Vagina (tissue), 2 donors: ENCODE measurements at regions of chr4 and their contacts with region 1.

Region 1: DNA sequence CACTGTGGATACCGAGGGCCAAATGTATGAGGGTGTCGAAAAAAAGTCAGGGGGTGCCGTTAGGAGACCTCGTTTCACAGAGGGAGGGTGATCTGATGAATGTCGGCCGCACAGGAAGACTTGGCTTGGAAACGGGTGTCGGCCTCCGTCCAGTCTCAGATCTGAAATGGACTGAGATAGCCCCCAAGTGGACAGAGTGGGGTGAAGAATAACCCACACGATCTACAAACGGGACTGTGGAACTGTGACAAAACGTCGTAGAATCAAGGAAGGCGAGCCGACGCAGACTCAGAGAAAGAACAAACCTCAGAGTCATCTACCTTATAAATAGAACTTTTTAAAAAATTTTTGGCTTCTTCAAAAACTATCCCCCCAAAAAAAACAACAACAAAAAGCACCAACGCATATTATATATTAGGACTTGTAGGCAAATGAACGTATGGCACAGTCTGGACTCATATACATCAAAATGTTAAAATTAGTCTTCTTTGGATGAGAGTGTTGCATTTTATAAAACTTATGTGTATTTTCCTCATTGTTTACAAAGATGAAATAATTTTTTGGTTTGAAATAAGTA is 63.8 kb upstream of the IRF2 start:
- DNase-seq: peak in 1 of 2 donors; percentile 96
- H3K4me3 ChIP-seq: peak overlapping the region; percentile 53 to 80
- H3K27ac ChIP-seq: peak overlapping the region; percentile 88
- H3K4me1 ChIP-seq: peaks cover 14% of the 10 kb centered on the region
- H3K27me3 ChIP-seq: no peaks in the 10 kb centered on the region
- CTCF ChIP-seq: peak in 2 of 3 experiments; percentile 60 to 76
- POLR2A ChIP-seq: no peak

Region 2: GRCh38 chr4:184287697-184288255 is 250.3 kb before region 1 on chr4:
- intact Hi-C with region 1: loop called (anchors 5 kb)
- DNase-seq: peak in 1 of 2 donors; percentile 87
- H3K4me3 ChIP-seq: no peak overlapping the region
- H3K27ac ChIP-seq: peak overlapping the region; percentile 16
- H3K4me1 ChIP-seq: peaks cover 21% of the 10 kb centered on the region
- H3K27me3 ChIP-seq: no peaks in the 10 kb centered on the region
- CTCF ChIP-seq: no peak
- POLR2A ChIP-seq: no peak

Region 3: GRCh38 chr4:184408021-184408710 is 129.9 kb before region 1 on chr4:
- intact Hi-C with region 1: loop called (anchors 5 kb)
- DNase-seq: no peak
- H3K4me3 ChIP-seq: no peak overlapping the region
- H3K27ac ChIP-seq: peak overlapping the region; percentile 71
- H3K4me1 ChIP-seq: peaks cover 32% of the 10 kb centered on the region
- H3K27me3 ChIP-seq: no peaks in the 10 kb centered on the region
- CTCF ChIP-seq: no peak
- POLR2A ChIP-seq: no peak

Region 4: DNA sequence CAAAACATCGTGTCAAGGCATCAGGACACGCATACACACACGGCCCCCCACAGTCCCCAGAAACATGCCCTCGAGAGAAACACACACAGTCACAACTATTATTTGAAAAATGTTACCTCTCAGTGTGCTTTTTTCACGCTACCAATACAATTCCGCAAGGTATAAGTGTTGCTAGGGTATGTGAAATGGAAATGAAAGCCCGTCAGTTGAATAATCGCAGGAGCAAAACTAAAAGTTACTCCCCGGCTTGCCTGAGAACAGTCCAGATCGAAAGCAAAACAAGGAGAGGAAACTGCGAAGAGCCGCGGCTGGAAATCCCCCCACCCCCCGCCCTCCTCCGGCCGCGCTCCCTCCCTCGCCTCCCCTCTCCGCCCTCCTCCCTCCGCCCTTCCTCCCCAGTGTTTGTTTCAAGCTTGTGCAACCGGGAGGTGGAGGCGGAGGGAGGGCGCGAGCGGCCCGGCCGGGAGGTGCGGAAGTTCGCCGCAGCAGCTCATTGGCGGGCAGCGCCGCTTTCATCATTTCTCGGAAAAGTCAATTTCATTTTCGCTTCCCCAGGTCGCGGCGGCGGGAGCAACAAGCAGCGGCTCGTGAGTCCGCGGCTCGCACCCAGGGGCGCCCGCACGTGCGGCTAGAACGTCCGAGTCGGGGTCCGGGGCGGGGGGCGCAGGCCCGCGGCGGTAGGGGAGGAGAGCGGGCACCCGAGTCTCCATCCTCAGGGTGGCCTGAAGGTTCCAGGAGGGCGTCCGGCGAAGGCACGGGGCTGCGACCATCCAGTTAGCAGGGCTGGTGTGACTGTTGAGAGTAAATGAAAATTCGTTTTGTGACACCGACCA is 63.6 kb before region 1 on chr4 and contains the start of gene IRF2:
- intact Hi-C with region 1: loop called (anchors 10 kb)
- DNase-seq: peak in 1 of 2 donors; percentile 98
- H3K4me3 ChIP-seq: peak within 1 kb of the TSS; percentile 77 to 95
- H3K27ac ChIP-seq: peak within 1 kb of the TSS; percentile 99
- H3K4me1 ChIP-seq: peaks cover 53% of the 10 kb centered on the region
- H3K27me3 ChIP-seq: no peaks in the 10 kb centered on the region
- CTCF ChIP-seq: peak in 1 of 3 experiments; percentile 21
- POLR2A ChIP-seq: peak in 1 of 2 donors; percentile 91
- total RNA-seq, gene IRF2: 18.7 TPM

Region 5: GRCh38 chr4:184649026-184649970 is 111.2 kb after region 1 on chr4 and contains the starts of genes CASP3 and PRIMPOL:
- intact Hi-C with region 1: loop called (anchors 1 kb)
- DNase-seq: peak in 1 of 2 donors; percentile 96
- H3K4me3 ChIP-seq: peak within 1 kb of the TSS; percentile 89 to 96
- H3K27ac ChIP-seq: peak within 1 kb of the TSS; percentile 96
- H3K4me1 ChIP-seq: peaks cover 45% of the 10 kb centered on the region
- H3K27me3 ChIP-seq: no peaks in the 10 kb centered on the region
- CTCF ChIP-seq: peak in 2 of 3 experiments; percentile 17 to 30
- POLR2A ChIP-seq: peak in 1 of 2 donors; percentile 91
- total RNA-seq, gene CASP3: 11.3 TPM
- total RNA-seq, gene PRIMPOL: 14.0 TPM